HepG2 (cell line): ENCODE measurements at regions of chr1 and their contacts with region 1.

Region 1: DNA sequence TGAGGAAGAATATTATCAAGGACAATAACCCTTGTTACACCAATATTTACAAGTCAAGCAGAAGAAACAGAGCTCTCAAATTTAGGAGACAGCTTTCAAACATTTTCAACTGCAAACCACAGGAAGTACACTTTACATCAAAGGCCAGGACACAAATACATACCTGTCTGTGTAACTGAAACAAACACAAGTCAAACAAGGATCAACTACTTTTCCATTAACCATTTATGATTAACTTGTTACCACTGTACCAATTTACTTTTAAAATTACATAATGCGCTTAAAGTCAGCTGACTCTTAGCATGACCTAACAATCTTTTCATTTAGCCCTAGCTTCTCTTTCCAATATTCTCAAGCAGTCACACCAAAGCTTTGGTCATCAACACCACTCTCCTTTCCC is 43.5 kb downstream of the TRIM33 start:
- DNase-seq: peak; percentile 94
- ATAC-seq: peak; percentile 80
- H3K4me3 ChIP-seq: peak overlapping the region in 2 of 3 experiments; percentile 17 to 54; a peak in 1 of 6 replicates
- H3K27ac ChIP-seq: peak overlapping the region; percentile 84
- H3K4me1 ChIP-seq: peaks cover 65% of the 10 kb centered on the region
- H3K27me3 ChIP-seq: no peaks in the 10 kb centered on the region
- CTCF ChIP-seq: no peak
- EP300 ChIP-seq: peak; percentile 75 to 98; a peak in 3 of 4 replicates
- POLR2A ChIP-seq: no peak
- RAD21 ChIP-seq: no peak

Region 2: GRCh38 chr1:114033216-114033706 is 434.2 kb before region 1 on chr1:
- CTCF ChIA-PET with region 1: no interaction called
- POLR2A ChIA-PET with region 1: no interaction called
- in situ Hi-C with region 1: no loop called
- intact Hi-C with region 1: no loop called
- DNase-seq: peak; percentile 24
- ATAC-seq: peak; percentile 86
- H3K4me3 ChIP-seq: no peak overlapping the region
- H3K27ac ChIP-seq: no peak overlapping the region
- H3K4me1 ChIP-seq: no peaks in the 10 kb centered on the region
- H3K27me3 ChIP-seq: no peaks in the 10 kb centered on the region; a peak in 3 of 5 replicates
- CTCF ChIP-seq: peak; percentile 47
- EP300 ChIP-seq: no peak
- POLR2A ChIP-seq: no peak
- RAD21 ChIP-seq: 0 out of 2 replicates have a peak, but pooled peaks have one; percentile 26

Region 3: GRCh38 chr1:114435107-114435715 is 32.3 kb before region 1 on chr1:
- CTCF ChIA-PET with region 1: no interaction called
- POLR2A ChIA-PET with region 1: interaction called, 4 read pairs
- in situ Hi-C with region 1: no loop called
- intact Hi-C with region 1: loop called (anchors 2 kb)
- DNase-seq: peak; percentile 78
- ATAC-seq: peak; percentile 99
- H3K4me3 ChIP-seq: peak overlapping the region in 1 of 3 experiments; percentile 17; a peak in 1 of 6 replicates
- H3K27ac ChIP-seq: peak overlapping the region; percentile 60
- H3K4me1 ChIP-seq: peaks cover 47% of the 10 kb centered on the region
- H3K27me3 ChIP-seq: no peaks in the 10 kb centered on the region
- CTCF ChIP-seq: no peak
- EP300 ChIP-seq: no peak
- POLR2A ChIP-seq: no peak
- RAD21 ChIP-seq: no peak

Region 4: GRCh38 chr1:114490274-114490693 is 22.8 kb after region 1 on chr1:
- CTCF ChIA-PET with region 1: no interaction called
- POLR2A ChIA-PET with region 1: interaction called, 3 read pairs
- in situ Hi-C with region 1: no loop called
- intact Hi-C with region 1: loop called (anchors 2 kb)
- DNase-seq: no peak
- ATAC-seq: no peak
- H3K4me3 ChIP-seq: no peak overlapping the region
- H3K27ac ChIP-seq: no peak overlapping the region
- H3K4me1 ChIP-seq: peaks cover 34% of the 10 kb centered on the region
- H3K27me3 ChIP-seq: no peaks in the 10 kb centered on the region
- CTCF ChIP-seq: no peak
- EP300 ChIP-seq: no peak
- POLR2A ChIP-seq: no peak
- RAD21 ChIP-seq: no peak

Region 5: GRCh38 chr1:114511032-114511785 is 43.7 kb after region 1 on chr1 and contains the start of gene TRIM33:
- CTCF ChIA-PET with region 1: no interaction called
- POLR2A ChIA-PET with region 1: interaction called, 8 read pairs
- in situ Hi-C with region 1: no loop called
- intact Hi-C with region 1: loop called (anchors 1 kb)
- DNase-seq: peak; percentile 80
- ATAC-seq: peak; percentile 78
- H3K4me3 ChIP-seq: peak within 1 kb of the TSS; percentile 84 to 95 (median 93)
- H3K27ac ChIP-seq: peak within 1 kb of the TSS; percentile 90
- H3K4me1 ChIP-seq: peaks cover 45% of the 10 kb centered on the region
- H3K27me3 ChIP-seq: no peaks in the 10 kb centered on the region
- CTCF ChIP-seq: 0 out of 2 replicates have a peak, but pooled peaks have one; percentile 5
- EP300 ChIP-seq: no peak
- POLR2A ChIP-seq: peak; percentile 78 to 87
- RAD21 ChIP-seq: peak; percentile 34; the same call in 1 of the 2 replicates
- total RNA-seq, gene TRIM33: 42.2 and 42.8 TPM in 2 replicates

Region 6: GRCh38 chr1:115545791-115546733 is 1078.6 kb after region 1 on chr1:
- CTCF ChIA-PET with region 1: no interaction called
- POLR2A ChIA-PET with region 1: no interaction called
- in situ Hi-C with region 1: no loop called
- intact Hi-C with region 1: no loop called
- DNase-seq: peak; percentile 60
- ATAC-seq: peak; percentile 98
- H3K4me3 ChIP-seq: no peak overlapping the region
- H3K27ac ChIP-seq: no peak overlapping the region
- H3K4me1 ChIP-seq: peaks cover 13% of the 10 kb centered on the region
- H3K27me3 ChIP-seq: no peaks in the 10 kb centered on the region
- CTCF ChIP-seq: peak; percentile 87
- EP300 ChIP-seq: no peak
- POLR2A ChIP-seq: no peak
- RAD21 ChIP-seq: no peak; the same call in 1 of the 2 replicates